Lower leg skin (tissue), 4 donors: ENCODE measurements at regions of chrX and their contacts with region 1.

Region 1: GRCh38 chrX:103197721-103198306 is 17.1 kb upstream of the BEX4 start:
- DNase-seq: no peak
- H3K4me3 ChIP-seq: no peak overlapping the region
- CTCF ChIP-seq: no peak
- POLR2A ChIP-seq: no peak

Region 2: DNA sequence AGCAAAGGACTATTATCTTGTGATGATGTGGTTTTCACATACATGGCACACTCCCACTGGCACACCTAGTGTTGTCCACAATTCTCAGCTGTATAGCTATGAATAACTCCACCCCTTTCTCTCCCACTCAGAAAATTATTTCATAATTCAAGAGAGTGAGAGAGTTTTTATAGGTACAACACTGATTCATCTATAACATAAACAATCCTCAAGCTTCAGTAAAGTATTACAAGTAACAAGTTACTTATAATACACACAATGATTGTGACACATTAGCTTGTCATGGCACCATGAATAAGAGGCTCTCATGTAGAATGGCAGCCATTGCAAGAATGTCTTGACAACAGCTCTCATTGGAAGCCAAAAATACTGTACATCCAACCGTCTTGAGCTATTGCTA is 277.6 kb after region 1 on chrX:
- intact Hi-C with region 1: loop called (anchors 10 kb)
- DNase-seq: no peak
- H3K4me3 ChIP-seq: no peak overlapping the region
- CTCF ChIP-seq: no peak
- POLR2A ChIP-seq: no peak